ENCODE measurements at regions of chr4 and their contacts with region 1.

Region 1: DNA sequence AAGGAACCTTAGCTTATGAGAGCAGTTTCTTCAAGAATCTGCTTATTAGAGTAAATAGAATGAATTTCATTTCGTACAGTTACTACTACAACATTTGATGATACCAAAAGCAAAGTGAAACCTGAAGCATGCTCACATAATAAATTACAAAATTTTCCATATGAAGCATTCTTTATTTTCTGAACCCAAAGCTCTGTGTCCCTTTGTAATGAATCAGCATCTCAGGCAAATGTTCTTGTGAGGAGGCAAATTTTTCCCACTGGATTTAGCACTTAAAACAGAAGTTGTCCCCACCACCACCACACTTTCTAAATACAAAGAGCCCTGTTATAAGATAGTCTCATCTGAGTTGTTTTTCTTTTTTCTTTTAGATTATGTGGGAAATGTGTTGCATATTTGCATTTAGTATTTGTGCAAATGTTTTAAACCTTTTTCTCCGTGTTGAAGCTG is 70.7 kb upstream of the NFKB1 start:
- DNase-seq: peak in 1 of 2 donors; percentile 20
- ATAC-seq: no peak
- H3K4me3 ChIP-seq: peak overlapping the region; percentile 52
- H3K4me3 Mint-ChIP-seq: peak overlapping the region; percentile 88
- H3K27ac ChIP-seq: peak overlapping the region; percentile 38
- H3K27ac Mint-ChIP-seq: peak overlapping the region; percentile 80 to 81
- H3K4me1 ChIP-seq: no peaks in the 10 kb centered on the region
- H3K4me1 Mint-ChIP-seq: peaks cover 0 to 6% of the 10 kb centered on the region in 2 donors
- H3K27me3 ChIP-seq: no peaks in the 10 kb centered on the region
- H3K27me3 Mint-ChIP-seq: no peaks in the 10 kb centered on the region
- CTCF ChIP-seq: no peak

Region 2: DNA sequence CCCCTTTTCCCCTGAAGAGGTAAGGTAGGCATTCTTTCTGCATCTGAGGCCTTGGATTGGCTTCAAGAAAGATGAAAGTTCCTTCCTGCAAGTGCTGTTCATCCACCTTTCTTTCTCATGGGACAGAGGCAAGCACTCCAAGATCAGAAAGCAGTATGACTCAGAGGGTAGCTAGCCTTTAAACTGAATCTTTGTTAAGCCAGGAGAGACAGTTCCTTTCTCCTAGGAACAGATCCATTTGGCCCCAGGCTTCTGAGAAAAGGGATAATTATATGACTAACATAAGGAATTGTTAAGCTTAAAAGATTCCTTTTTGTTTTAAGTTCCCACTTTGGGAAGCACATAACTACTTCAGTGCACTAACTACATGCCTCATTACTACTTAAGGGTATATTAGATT is 1275.1 kb before region 1 on chr4:
- intact Hi-C with region 1: no loop called
- DNase-seq: no peak
- ATAC-seq: no peak
- H3K4me3 ChIP-seq: no peak overlapping the region
- H3K4me3 Mint-ChIP-seq: no peak overlapping the region
- H3K27ac ChIP-seq: no peak overlapping the region
- H3K27ac Mint-ChIP-seq: no peak overlapping the region
- H3K4me1 ChIP-seq: peaks cover 4% of the 10 kb centered on the region
- H3K4me1 Mint-ChIP-seq: peaks cover 45 to 61% of the 10 kb centered on the region in 2 donors
- H3K27me3 ChIP-seq: no peaks in the 10 kb centered on the region
- H3K27me3 Mint-ChIP-seq: no peaks in the 10 kb centered on the region
- CTCF ChIP-seq: no peak

Region 3: GRCh38 chr4:102469806-102470205 is 39.3 kb after region 1 on chr4:
- intact Hi-C with region 1: no loop called
- DNase-seq: peak in 1 of 2 donors; percentile 23
- ATAC-seq: no peak
- H3K4me3 ChIP-seq: no peak overlapping the region
- H3K4me3 Mint-ChIP-seq: no peak overlapping the region
- H3K27ac ChIP-seq: no peak overlapping the region
- H3K27ac Mint-ChIP-seq: no peak overlapping the region
- H3K4me1 ChIP-seq: no peaks in the 10 kb centered on the region
- H3K4me1 Mint-ChIP-seq: peaks cover 0 to 7% of the 10 kb centered on the region in 2 donors
- H3K27me3 ChIP-seq: no peaks in the 10 kb centered on the region
- H3K27me3 Mint-ChIP-seq: peaks cover 3 to 17% of the 10 kb centered on the region in 2 donors
- CTCF ChIP-seq: no peak

Region 4: DNA sequence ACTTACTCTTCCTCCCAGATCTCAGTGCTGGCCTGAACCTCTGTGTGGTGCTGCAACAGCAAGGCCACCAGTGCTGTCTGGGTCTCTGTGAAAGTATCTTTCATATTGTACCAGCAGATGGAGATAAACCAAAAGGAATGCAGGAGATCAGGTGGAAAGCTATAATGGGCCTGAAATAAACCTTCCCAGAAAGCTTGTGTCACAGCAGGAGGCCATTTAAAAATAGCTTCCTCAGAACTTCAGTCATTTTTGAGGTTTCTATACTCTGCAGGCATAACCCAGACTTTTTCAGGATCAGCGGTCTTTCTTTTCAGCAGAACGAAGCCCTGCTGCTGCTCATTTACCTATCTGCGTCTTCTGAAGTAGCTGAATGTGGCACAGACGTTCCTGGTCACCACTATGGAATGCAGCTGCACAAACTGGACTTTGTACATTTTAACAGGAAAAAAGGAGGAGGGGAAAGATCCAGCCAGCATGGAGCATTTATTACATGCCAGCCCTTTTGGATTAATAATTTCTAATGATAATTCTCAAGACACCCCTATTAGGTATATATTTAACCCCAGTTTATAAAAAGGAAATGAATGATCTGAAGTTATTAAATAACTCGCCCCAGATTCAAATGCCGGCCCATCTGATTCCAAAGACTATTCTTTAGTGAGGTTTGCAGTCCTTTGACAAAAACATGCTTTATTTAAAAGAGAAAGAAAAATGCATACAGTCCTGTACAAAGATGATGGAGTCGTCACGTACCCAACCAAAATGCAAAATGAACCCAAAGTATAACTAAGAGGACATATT is 190.4 kb after region 1 on chr4:
- intact Hi-C with region 1: loop called (anchors 1 kb)
- DNase-seq: peak in 1 of 2 donors; percentile 55
- ATAC-seq: peak in 1 of 3 donors; percentile 9
- H3K4me3 ChIP-seq: no peak overlapping the region
- H3K4me3 Mint-ChIP-seq: no peak overlapping the region
- H3K27ac ChIP-seq: no peak overlapping the region
- H3K27ac Mint-ChIP-seq: no peak overlapping the region
- H3K4me1 ChIP-seq: peaks cover 4% of the 10 kb centered on the region
- H3K4me1 Mint-ChIP-seq: peaks cover 5 to 7% of the 10 kb centered on the region in 2 donors
- H3K27me3 ChIP-seq: no peaks in the 10 kb centered on the region
- H3K27me3 Mint-ChIP-seq: no peaks in the 10 kb centered on the region
- CTCF ChIP-seq: no peak

Region 5: DNA sequence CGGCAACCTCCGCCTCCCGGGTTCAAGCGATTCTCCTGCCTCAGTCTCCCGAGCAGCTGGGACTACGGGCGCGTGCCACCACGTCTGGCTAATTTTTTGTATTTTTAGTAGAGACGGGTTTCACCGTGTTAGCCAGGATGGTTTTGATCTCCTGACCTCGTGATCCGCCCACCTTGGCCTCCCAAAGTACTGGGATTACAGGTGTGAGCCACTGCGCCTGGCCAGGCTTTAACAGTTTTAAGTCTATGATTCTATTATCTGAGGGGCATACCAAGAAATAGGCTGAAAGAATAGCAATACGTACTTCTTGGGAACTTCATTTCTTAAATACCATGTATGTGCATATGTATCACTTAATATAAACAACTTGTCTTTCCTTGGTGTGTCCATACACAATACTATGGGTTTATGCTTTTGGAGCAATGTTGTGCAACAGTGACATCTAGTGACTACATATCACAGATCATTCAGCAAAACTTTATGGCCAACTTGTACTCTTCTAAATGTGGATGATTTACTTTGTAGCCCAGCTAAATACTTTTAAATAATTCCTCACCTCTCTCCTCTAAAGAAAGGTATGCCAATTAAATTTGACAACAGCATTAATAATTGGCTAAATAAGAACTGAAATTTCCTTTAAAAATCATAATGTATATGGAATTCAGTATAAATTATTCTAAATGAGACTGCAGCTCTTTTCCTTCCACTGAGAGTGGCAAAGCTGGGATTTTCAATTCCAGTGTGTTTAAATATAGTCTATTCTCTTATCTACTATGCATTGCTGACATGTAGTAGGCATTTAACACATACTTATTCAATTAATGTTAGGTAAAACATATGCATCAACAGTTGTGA is 578.6 kb after region 1 on chr4:
- intact Hi-C with region 1: loop called (anchors 5 kb)
- DNase-seq: peak in 1 of 2 donors; percentile 85
- ATAC-seq: peak; percentile 89 to 97 (median 90)
- H3K4me3 ChIP-seq: no peak overlapping the region
- H3K4me3 Mint-ChIP-seq: no peak overlapping the region
- H3K27ac ChIP-seq: no peak overlapping the region
- H3K27ac Mint-ChIP-seq: no peak overlapping the region
- H3K4me1 ChIP-seq: no peaks in the 10 kb centered on the region
- H3K4me1 Mint-ChIP-seq: no peaks in the 10 kb centered on the region
- H3K27me3 ChIP-seq: no peaks in the 10 kb centered on the region
- H3K27me3 Mint-ChIP-seq: peaks cover 3 to 5% of the 10 kb centered on the region in 2 donors
- CTCF ChIP-seq: peak; percentile 85